Caco-2 (cell line): ENCODE measurements at regions of chr20 and their contacts with region 1.

Region 1: DNA sequence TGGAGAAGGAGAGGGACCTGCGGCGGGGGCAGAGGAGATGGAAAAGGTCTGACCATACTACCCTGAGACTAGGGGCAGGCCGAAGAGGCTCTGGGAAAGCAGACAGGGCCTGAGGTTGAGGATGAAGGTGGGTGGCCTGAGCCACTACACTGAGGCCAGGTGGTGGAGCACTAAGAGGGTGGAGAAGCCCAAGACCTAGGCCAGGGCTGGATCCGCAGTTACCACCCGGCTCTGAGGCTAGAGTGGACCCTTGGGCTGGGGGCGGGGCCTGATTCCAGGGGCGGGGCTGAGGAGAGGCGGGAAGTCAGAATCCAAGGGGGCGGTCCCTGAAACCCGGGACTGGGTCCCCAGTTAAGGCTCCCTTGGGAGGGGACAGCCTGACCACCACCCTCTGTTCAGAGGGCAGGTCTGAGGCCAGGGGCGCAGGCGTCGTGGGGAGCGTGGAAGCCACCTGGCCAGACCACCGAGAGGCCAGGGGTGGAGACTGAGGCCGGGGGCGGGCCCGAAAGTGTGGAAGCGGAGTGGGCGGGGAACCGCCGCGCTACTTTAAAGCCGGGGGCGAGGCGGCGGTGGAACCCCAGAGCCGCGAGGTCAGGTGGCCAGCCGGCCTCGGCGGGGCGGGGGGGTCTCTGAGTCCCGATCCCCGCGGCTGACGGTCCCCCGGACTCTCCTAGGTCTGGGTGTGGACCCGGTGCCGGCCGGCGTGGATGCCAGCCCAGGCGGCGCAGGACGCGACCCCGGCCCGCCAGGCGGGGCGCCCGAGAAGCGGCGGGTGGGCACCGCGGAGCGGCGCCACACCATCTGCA is 8.2 kb downstream of the CCM2L start:
- DNase-seq: peak; percentile 98
- H3K4me3 ChIP-seq: peak overlapping the region; percentile 79
- H3K4me3 Mint-ChIP-seq: peak overlapping the region; percentile 93
- H3K27ac Mint-ChIP-seq: peak overlapping the region; percentile 85
- H3K4me1 ChIP-seq: peaks cover 12% of the 10 kb centered on the region
- H3K4me1 Mint-ChIP-seq: peaks cover 13% of the 10 kb centered on the region
- H3K27me3 ChIP-seq: peaks cover 13% of the 10 kb centered on the region
- H3K27me3 Mint-ChIP-seq: peaks cover 46% of the 10 kb centered on the region
- CTCF ChIP-seq: peak in 1 of 2 experiments; percentile 14

Region 2: DNA sequence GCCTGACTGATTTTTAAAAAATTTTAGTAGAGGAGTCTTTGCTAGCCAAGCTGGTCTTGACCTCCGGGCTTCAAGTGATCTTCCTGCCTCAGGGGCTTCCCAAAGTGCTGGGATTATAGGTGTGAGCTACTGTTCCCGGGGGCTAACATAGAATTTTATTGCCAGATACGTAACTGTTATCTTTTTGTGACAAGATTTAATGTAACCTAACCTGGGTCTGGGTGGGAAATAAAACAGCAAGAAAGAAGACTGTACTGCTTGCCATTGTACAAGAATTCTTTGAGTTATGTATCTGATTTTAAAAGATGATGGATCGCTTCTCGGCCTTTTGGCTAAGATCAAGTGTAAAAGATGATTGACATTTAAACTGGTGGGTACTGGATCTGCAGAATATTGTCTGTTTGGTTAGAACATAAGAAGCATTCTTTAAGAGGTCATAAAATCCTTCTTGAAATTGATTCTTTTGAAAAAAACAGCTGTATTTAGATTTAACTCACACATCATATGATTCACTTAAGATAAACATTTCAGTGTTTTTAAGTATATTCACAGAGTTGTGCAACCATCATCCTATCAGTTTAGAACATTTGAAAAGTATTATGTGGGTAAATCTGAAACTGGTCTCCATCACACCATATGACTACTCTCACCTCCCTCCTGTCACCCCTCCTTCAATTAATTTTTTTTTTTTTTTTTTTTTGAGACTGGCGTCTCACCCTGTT is 257.8 kb before region 1 on chr20:
- CTCF ChIA-PET with region 1: interaction called, 10 read pairs
- POLR2A ChIA-PET with region 1: no interaction called
- intact Hi-C with region 1: no loop called
- DNase-seq: no peak
- H3K4me3 ChIP-seq: no peak overlapping the region
- H3K4me3 Mint-ChIP-seq: no peak overlapping the region
- H3K27ac Mint-ChIP-seq: peak overlapping the region; percentile 32
- H3K4me1 ChIP-seq: peaks cover 19% of the 10 kb centered on the region
- H3K4me1 Mint-ChIP-seq: peaks cover 32% of the 10 kb centered on the region
- H3K27me3 ChIP-seq: no peaks in the 10 kb centered on the region
- H3K27me3 Mint-ChIP-seq: no peaks in the 10 kb centered on the region
- CTCF ChIP-seq: no peak

Region 3: DNA sequence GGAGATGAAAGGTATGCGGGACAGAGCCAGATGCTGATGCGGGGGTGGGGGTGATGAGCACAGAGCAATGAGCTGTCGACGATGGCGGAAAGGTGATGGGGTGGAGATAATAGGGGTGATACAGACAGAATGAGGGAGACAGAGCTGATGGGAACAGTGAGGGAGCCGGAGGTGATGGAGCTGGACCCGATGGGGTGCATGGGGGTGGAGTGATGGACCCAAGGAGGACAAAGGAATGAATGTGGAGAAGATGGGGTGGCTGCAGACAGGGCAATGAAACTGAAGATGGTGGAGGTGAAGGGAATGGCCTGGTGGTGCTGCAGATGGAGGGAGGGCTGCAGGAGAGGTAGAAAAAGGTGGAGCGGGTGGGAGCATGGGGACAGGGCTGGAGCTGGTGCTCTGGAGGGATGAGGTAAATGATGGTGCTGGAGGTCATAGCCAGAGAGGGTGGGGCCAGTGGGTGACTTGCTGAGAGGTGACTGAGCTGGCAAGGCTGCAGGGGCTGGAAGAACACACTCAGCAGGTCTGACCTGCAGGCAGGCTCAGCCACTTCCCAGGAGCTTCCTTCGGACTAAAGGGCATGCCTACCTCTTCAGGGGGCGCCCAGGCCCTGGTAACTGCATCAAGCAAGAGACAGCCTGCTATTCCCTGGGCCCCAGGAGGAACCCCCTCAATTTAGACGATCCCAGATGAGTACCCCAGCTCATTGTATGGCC is 167.1 kb before region 1 on chr20:
- CTCF ChIA-PET with region 1: interaction called, 19 read pairs
- POLR2A ChIA-PET with region 1: no interaction called
- intact Hi-C with region 1: loop called (anchors 5 kb)
- DNase-seq: no peak
- H3K4me3 ChIP-seq: no peak overlapping the region
- H3K4me3 Mint-ChIP-seq: no peak overlapping the region
- H3K27ac Mint-ChIP-seq: no peak overlapping the region
- H3K4me1 ChIP-seq: peaks cover 7% of the 10 kb centered on the region; the same call in 1 of the 2 replicates
- H3K4me1 Mint-ChIP-seq: no peaks in the 10 kb centered on the region
- H3K27me3 ChIP-seq: peaks cover 11% of the 10 kb centered on the region
- H3K27me3 Mint-ChIP-seq: peaks cover 18% of the 10 kb centered on the region
- CTCF ChIP-seq: no peak

Region 4: DNA sequence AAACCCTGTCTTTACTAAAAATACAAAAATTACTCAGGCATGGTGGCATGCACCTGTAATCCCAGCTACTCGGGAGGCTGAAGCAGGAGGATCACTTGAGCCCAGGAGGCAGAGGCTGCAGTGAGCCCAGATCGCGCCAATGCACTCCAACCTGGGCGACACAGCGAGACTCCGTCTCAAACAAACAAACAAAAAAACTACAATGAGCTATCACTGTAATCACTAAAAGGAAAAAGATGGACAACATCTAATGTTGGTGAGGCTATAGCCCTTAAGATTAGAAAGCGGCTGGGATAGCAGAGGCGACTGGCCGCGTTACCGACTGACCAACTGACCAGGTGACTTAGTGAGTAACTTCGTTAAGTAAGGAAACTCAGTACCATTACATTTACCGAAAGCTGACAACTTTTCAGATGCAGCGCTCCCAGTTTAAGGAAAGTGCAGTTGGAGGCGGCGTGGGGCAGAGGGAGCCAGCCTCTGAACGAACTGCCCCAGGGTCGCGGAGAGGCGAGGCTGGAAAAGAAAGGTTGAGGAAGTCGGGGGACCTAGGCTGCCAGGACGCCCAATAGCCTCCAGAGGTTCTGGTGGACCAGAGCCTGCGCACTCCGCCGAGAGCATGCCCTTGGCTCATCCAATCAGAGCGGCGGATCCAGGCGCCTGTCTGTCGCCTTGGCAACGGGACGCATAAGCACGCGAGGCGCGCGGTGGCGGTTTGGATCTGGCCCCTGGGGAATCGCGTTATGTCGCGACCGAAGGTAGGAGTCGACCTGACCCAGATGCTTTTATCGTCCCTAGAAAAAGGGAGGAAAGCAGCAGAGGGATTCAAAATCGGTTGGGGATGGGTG is 139.1 kb before region 1 on chr20:
- CTCF ChIA-PET with region 1: interaction called, 15 read pairs
- POLR2A ChIA-PET with region 1: interaction called, 3 read pairs
- intact Hi-C with region 1: no loop called
- DNase-seq: peak; percentile 99 to 100
- H3K4me3 ChIP-seq: peak overlapping the region; percentile 82
- H3K4me3 Mint-ChIP-seq: peak overlapping the region; percentile 88
- H3K27ac Mint-ChIP-seq: peak overlapping the region; percentile 95
- H3K4me1 ChIP-seq: no peaks in the 10 kb centered on the region
- H3K4me1 Mint-ChIP-seq: peaks cover 12% of the 10 kb centered on the region
- H3K27me3 ChIP-seq: no peaks in the 10 kb centered on the region
- H3K27me3 Mint-ChIP-seq: peaks cover 2% of the 10 kb centered on the region
- CTCF ChIP-seq: no peak

Region 5: DNA sequence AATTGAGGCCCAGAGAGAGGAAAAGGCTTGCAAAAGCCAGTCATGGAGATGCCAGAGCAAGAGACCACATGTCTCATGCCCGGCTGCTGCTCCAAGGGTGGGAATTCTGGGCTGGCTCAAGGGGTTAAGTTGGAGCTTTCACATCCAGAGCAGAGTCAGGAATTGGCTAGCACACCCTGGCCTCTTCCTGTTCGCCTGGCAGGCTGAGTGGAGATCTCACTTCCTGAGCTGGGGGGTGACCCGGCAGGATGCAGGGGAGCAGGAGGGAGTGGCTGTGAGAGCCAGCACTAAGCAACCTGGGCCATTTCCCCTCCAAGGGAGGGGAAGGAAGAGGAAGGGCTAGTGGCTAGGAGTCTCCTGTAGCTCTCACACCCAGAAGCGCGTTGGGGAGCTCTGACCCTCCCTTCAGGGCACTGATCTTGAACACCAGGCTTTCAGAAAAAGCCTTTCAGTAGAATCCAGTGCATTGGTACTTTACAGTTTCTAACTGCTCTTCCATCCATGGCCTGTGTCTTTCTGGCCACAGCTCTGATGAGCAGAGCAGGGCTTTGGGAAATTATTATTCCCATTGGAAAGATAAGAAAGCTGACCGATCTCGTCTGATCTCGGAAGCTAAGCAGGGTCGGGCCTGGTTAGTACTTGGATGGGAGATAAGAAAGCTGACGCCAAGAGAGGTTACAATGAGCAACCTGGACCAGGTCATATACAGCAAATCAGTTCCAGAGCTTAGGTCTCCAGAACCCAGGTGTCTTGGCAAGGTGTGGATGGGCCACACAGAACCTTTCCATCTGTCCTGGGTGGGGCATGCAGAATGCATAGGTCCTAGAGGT is 10.5 kb before region 1 on chr20:
- CTCF ChIA-PET with region 1: interaction called, 13 read pairs
- POLR2A ChIA-PET with region 1: no interaction called
- intact Hi-C with region 1: no loop called
- DNase-seq: no peak
- H3K4me3 ChIP-seq: no peak overlapping the region
- H3K4me3 Mint-ChIP-seq: no peak overlapping the region
- H3K27ac Mint-ChIP-seq: no peak overlapping the region
- H3K4me1 ChIP-seq: no peaks in the 10 kb centered on the region
- H3K4me1 Mint-ChIP-seq: peaks cover 7% of the 10 kb centered on the region
- H3K27me3 ChIP-seq: 0 out of 2 replicates have a peak, but pooled peaks cover 2% of the 10 kb centered on the region
- H3K27me3 Mint-ChIP-seq: peaks cover 18% of the 10 kb centered on the region
- CTCF ChIP-seq: no peak

Region 6: GRCh38 chr20:32762149-32762753 is 743.8 kb after region 1 on chr20 and contains the start of gene DNMT3B:
- CTCF ChIA-PET with region 1: no interaction called
- POLR2A ChIA-PET with region 1: no interaction called
- intact Hi-C with region 1: no loop called
- DNase-seq: peak; percentile 97 to 99
- H3K4me3 ChIP-seq: peak within 1 kb of the TSS; percentile 87
- H3K4me3 Mint-ChIP-seq: peak within 1 kb of the TSS; percentile 100
- H3K27ac Mint-ChIP-seq: peak within 1 kb of the TSS; percentile 93
- H3K4me1 ChIP-seq: peaks cover 25% of the 10 kb centered on the region
- H3K4me1 Mint-ChIP-seq: peaks cover 33% of the 10 kb centered on the region
- H3K27me3 ChIP-seq: no peaks in the 10 kb centered on the region
- H3K27me3 Mint-ChIP-seq: no peaks in the 10 kb centered on the region
- CTCF ChIP-seq: peak in 1 of 2 experiments; percentile 31
- total RNA-seq, gene DNMT3B: 95.5 and 105 TPM in 2 replicates